Esophagus muscularis mucosa (tissue), 4 donors: ENCODE measurements at regions of chr9 and their contacts with region 1.

Region 1: DNA sequence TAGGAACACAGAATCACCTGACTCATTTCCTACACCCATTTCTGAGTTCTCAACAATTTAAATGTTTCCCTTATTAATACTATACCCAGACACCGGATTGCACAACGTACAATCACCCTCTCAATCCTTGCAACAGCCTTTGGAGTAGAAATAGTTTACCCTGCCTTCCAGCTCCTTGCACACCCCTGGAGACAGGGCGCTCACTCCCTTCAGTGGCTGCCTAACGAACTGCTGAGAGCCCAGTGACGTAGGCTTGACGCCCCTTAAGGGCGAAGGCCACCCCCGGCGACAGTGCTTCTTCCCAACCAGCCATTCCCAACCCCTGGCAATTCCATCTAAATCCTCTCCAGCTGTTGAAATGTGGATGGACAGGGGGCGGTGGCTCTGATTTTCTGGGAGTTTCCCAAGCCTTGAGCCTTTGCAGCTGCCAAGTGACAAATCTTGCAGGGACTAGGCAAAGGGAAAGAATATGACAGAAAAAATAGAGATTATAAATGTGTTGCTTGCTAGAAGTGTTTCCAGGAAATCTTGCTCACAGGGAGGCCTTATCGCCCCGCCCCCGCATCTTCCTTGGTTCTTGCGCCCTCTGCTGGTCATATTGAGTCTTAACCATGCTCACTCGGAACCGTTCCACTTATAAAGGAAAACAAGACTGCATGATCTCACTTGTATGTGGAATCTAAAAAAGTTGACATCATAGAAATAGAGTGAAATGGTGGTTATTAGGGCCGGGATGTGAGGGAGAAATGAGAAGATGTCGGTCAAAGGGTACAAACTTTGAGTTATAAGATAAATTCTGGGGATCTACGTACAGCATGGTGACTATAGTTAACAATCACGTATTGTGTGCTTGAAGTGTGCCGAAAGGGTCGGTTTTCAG is 7.6 kb upstream of the BARX1 start:
- DNase-seq: peak; percentile 96
- H3K4me3 ChIP-seq: peak overlapping the region in 2 of 4 donors; percentile 9 to 18
- H3K27ac ChIP-seq: no peak overlapping the region
- H3K4me1 ChIP-seq: peaks cover 30 to 40% (median 38%) of the 10 kb centered on the region in 4 donors
- H3K27me3 ChIP-seq: peaks cover 6 to 69% (median 36%) of the 10 kb centered on the region in 4 donors
- CTCF ChIP-seq: peak; percentile 76 to 90 (median 83)
- EP300 ChIP-seq: no peak
- POLR2A ChIP-seq: no peak

Region 2: DNA sequence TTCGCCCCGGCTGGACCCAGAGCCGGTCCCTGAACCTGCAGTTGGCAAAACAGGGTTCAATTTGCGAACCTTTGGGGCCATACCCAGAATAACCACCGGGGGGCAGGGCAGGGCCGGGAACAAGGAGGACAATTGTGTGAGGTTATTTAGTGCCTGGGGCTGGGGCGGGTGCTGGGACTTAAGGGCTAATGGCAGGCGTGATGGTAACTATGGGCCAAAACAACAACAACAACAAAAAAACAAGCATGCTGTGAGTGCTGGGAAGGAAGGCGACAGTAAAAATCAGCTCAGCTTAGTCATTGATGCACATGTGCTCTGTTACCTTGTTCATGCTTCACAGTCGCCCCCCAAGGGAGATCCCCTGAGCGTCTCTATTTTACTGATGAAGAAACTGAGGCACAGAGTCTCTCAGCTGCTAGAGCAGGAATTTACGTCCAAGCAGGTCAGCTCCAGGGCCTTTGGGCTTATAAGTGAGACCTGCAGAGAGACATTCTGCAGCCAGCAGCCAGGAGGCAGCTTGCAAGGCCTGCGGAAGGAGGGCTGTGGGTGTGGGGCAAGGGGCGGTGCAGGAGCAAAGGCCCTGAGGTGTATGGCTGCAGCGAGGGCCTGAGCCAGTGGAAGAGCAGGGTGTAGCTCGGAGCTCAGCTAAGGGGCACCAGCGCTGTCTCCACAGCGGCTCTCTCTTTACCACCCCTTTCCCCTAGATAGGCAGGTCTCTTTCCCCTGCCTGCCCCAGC is 280.4 kb before region 1 on chr9:
- intact Hi-C with region 1: loop called (anchors 2 kb)
- DNase-seq: peak; percentile 94
- H3K4me3 ChIP-seq: no peak overlapping the region
- H3K27ac ChIP-seq: no peak overlapping the region
- H3K4me1 ChIP-seq: peaks cover 0 to 8% (median 5%) of the 10 kb centered on the region in 4 donors
- H3K27me3 ChIP-seq: peaks cover 0 to 19% (median 0%) of the 10 kb centered on the region in 4 donors
- CTCF ChIP-seq: peak; percentile 70 to 88 (median 83)
- EP300 ChIP-seq: no peak
- POLR2A ChIP-seq: no peak

Region 3: DNA sequence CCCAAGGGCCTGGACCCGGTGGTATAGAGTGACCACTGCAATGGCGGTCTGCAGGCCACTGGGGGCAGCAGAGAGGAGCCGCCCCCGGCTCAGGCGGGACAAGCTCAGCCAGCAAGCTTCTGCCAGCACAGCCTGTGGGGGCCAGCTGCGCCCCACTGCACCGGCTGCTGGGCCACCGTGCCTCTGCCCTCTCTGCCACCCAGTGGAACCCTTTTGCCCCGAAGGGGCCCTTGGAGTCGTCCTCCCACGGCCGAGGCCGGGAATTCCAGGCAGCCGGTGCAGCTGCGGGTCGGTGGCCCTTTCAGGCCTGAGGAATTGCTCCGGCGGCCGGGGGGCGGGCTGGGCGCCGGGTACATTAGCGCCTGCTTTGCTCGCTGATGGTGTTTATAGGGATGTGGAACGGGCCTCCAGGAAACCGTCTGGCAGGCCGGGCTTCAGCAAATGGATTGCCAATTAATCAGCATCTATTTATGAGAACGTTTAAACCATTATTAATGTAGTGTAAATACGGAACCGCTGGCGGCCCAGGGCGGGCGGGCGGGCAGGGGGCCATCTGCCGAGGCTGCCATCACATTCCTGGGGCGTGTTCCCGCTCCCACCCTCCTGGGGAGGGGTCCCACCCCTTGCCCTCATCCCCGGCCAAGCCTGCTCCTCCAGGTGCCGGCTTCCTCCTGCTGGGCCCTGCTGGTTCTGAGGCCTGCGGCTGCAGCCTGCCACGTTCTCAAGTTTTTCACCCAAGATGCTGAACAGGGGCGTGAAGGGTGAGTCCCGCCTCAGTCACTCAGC is 135.1 kb before region 1 on chr9:
- intact Hi-C with region 1: loop called (anchors 5 kb)
- DNase-seq: peak; percentile 78
- H3K4me3 ChIP-seq: peak overlapping the region; percentile 37 to 53 (median 49)
- H3K27ac ChIP-seq: peak overlapping the region in 3 of 4 donors; percentile 61 to 69 (median 66)
- H3K4me1 ChIP-seq: peaks cover 10 to 42% (median 36%) of the 10 kb centered on the region in 4 donors
- H3K27me3 ChIP-seq: peaks cover 0 to 43% (median 0%) of the 10 kb centered on the region in 4 donors
- CTCF ChIP-seq: peak; percentile 74 to 90 (median 81)
- EP300 ChIP-seq: no peak
- POLR2A ChIP-seq: no peak